Heart left ventricle (tissue), 16 donors: ENCODE measurements at regions of chr9 and their contacts with region 1.

Region 1: DNA sequence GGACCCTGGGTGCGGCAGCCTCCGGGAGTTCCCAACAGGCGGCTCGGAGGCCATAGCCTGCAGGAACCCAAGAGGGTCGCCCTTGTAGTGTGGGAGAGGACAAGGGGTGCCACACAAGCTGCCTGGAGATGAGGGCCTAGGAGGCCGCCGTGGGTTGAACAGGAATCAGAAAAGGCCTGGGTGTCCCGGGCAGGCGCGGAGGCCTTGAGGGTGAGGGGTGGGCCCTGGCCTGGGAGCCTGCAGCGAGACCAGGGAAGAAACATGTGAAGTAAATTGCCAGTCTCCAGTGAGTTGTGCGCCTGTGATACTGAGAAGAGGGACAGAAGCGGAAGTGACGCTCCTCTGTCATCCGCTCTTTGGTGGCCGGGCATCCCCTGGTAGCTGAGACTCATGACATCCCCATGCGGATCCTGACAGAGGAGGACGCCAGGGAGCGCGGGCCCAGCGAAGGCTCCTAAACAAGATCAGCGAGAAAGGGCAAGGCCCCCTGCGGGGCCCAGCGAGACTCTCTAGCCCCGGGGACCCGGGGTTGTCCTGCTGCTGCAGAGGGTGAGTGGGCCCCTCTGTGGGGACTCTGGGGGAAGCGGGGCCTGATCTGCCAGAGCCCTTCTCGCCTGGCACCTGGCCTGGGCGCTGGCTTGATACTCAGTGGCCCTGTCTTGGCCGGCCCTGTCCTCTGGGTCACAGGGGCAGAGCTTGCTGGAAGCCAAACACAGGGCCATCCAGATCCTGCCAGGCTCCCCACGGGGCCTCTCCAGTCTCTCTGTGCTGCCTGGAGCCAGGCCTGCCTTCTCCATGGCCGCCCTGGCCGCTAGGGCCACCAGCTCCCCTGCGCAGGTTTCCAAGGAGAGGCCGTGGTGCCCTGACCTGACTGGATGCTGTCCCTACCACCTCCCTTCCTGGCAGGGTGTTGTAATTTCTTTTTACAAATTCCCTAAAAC is 788.4 kb downstream of the TLE4 start:
- DNase-seq: no peak
- ATAC-seq: no peak
- H3K4me3 ChIP-seq: no peak overlapping the region
- H3K27ac ChIP-seq: no peak overlapping the region
- H3K4me1 ChIP-seq: no peaks in the 10 kb centered on the region
- H3K27me3 ChIP-seq: no peaks in the 10 kb centered on the region
- CTCF ChIP-seq: no peak
- POLR2A ChIP-seq: no peak

Region 2: DNA sequence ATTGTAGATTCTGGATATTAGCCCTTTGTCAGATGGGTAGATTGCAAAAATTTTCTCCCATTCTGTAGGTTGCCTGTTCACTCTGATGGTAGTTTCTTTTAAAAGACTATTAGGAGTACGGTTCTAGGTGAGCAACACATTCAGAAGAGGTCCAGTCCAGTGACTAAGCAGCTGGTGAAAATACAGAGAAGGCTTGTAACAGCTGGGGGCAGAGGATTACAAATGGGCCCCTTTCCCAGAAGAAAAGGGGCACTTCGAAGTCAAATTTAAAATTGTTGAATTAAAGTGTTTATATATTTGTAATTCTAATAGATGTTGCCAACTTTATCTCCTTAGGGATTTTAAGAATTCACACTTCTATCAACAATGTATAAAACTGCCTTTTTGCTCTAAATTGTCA is 68.0 kb before region 1 on chr9:
- intact Hi-C with region 1: loop called in 1 of 10 experiments (anchors 10 kb)
- DNase-seq: no peak
- ATAC-seq: no peak
- H3K4me3 ChIP-seq: no peak overlapping the region
- H3K27ac ChIP-seq: no peak overlapping the region
- H3K4me1 ChIP-seq: no peaks in the 10 kb centered on the region
- H3K27me3 ChIP-seq: no peaks in the 10 kb centered on the region
- CTCF ChIP-seq: no peak
- POLR2A ChIP-seq: no peak